Sigmoid colon (tissue), 7 donors: ENCODE measurements at regions of chr7 and their contacts with region 1.

Region 1: DNA sequence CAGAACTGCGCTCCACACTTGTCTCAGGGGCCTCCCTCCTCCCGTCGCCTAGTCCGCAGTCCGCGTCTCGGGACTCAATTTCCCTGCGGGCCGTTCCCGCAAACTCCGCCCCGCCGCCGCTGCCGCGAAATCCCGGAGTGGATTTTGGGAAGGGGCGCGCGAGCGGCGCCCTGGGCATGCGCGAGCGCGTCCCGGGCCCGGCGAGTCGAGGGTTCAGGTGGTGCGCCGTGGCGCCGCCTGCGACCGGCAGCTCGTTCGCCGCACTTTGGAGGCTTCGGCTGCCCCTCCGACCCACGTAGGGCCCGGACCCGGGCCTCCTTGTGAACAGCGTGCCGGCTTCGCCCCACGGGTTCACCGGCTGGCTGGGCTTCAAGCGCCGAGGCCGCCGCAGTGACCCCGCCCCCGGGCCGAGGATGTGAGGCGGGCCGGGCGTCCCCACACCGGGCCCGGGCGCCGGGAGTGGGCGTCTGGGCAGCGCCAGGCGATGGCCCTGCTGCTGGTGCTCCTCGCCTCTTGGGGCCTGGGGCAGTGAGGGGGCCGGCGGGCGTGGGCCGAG is at the start of gene PLEKHA8:
- DNase-seq: peak; percentile 93
- H3K4me3 ChIP-seq: peak within 1 kb of the TSS; percentile 66 to 91 (median 88)
- H3K27ac ChIP-seq: peak within 1 kb of the TSS; percentile 89 to 97 (median 94)
- H3K4me1 ChIP-seq: peaks cover 3 to 62% (median 47%) of the 10 kb centered on the region in 4 donors
- H3K27me3 ChIP-seq: no peaks in the 10 kb centered on the region
- CTCF ChIP-seq: no peak
- EP300 ChIP-seq: peak in 1 of 4 donors; percentile 77
- POLR2A ChIP-seq: no peak
- total RNA-seq, gene PLEKHA8: 7.7 to 12.2 (median 9.1) TPM

Region 2: DNA sequence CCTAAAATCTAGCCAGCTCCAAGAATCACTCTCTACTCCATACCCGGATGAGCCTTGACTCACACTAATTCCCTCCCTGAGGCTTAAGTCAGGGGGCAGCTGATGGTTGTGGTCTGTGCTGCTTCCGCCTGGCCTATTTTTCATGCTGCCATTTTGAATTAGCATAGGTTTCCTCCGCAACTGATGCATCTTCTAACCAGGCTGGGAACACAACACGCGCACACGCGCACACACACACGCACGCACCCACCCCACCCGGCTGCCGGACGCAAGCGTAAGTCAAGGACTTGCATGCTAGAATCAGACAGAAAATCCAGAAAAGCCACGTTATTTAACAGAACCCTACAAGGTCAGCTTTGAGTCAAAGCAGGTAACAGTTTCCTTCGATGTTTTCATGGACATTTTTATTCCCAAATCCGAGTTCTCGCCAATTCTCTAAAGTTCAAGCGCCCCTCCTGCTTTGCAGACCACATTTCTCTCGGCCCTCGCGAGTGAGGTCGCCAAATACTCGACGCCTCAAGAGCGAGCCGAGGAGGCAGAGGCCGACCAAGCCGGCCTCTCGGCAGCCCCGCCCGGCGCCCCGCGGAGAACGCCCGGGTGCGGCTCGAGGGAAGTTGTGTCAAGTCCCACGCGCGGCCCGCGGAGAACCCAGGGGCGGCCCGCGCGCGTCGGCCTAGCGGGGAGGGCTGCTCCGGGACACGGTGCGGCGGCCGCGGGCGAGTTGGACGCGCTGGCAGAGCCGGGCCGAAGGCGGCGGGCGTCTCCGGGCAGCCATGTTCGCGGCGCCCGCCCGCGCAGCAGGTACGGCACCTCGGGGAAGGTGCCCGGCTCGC is 39.6 kb before region 1 on chr7:
- intact Hi-C with region 1: loop called (anchors 1 kb)
- DNase-seq: peak; percentile 78
- H3K4me3 ChIP-seq: peak overlapping the region; percentile 86 to 99 (median 92)
- H3K27ac ChIP-seq: peak overlapping the region; percentile 84 to 98 (median 91)
- H3K4me1 ChIP-seq: peaks cover 0 to 27% (median 15%) of the 10 kb centered on the region in 4 donors
- H3K27me3 ChIP-seq: no peaks in the 10 kb centered on the region
- CTCF ChIP-seq: no peak
- EP300 ChIP-seq: no peak
- POLR2A ChIP-seq: no peak